ENCODE measurements at regions of chr10 and their contacts with region 1.

Region 1: DNA sequence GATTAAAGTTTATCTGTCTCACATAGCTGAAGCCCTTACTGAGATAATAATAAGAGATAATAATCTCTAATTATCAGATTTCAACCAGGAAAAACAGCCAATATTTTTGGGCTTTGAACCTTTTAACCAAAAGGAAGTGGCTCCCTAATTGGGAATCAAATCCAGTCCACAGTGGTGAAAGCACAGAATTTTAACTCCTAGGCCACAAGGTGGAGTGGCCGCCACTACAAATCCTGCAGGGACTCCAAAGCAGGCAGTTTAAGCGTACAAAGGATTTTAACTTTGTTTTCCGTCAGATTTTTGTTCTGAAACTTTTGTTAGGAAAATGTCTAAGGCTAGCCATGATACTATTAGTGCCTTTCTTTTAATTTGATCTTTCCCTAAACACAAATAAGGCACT is 99.6 kb upstream of the CCNY start:
- DNase-seq: peak in 2 of 4 experiments; percentile 34 to 49
- ATAC-seq: peak; percentile 84
- H3K4me3 ChIP-seq: no peak overlapping the region
- H3K27ac ChIP-seq: no peak overlapping the region
- H3K4me1 ChIP-seq: no peaks in the 10 kb centered on the region; a peak in 1 of 5 replicates
- H3K27me3 ChIP-seq: no peaks in the 10 kb centered on the region
- CTCF ChIP-seq: peak; percentile 42 to 76 (median 47); a peak in 5 of 6 replicates
- EP300 ChIP-seq: no peak
- POLR2A ChIP-seq: no peak
- RAD21 ChIP-seq: peak; percentile 79 to 80

Region 2: GRCh38 chr10:34967335-34967880 is 269.3 kb before region 1 on chr10:
- CTCF ChIA-PET with region 1: no interaction called
- POLR2A ChIA-PET with region 1: no interaction called
- in situ Hi-C with region 1: no loop called
- intact Hi-C with region 1: no loop called
- DNase-seq: no peak
- ATAC-seq: no peak
- H3K4me3 ChIP-seq: no peak overlapping the region
- H3K27ac ChIP-seq: no peak overlapping the region
- H3K4me1 ChIP-seq: no peaks in the 10 kb centered on the region; a peak in 1 of 5 replicates
- H3K27me3 ChIP-seq: peaks cover 18 to 36% of the 10 kb centered on the region in 2 experiments; a peak in 4 of 5 replicates
- CTCF ChIP-seq: no peak
- EP300 ChIP-seq: no peak
- POLR2A ChIP-seq: no peak
- RAD21 ChIP-seq: no peak

Region 3: GRCh38 chr10:35379226-35380137 is 142.7 kb after region 1 on chr10:
- CTCF ChIA-PET with region 1: no interaction called
- POLR2A ChIA-PET with region 1: no interaction called
- in situ Hi-C with region 1: no loop called
- intact Hi-C with region 1: loop called (anchors 5 kb)
- DNase-seq: peak; percentile 91 to 94 (median 92)
- ATAC-seq: peak; percentile 85
- H3K4me3 ChIP-seq: peak overlapping the region; percentile 27
- H3K27ac ChIP-seq: peak overlapping the region; percentile 96
- H3K4me1 ChIP-seq: peaks cover 25 to 65% of the 10 kb centered on the region in 2 experiments
- H3K27me3 ChIP-seq: no peaks in the 10 kb centered on the region
- CTCF ChIP-seq: peak; percentile 30 to 60 (median 59); a peak in 4 of 6 replicates
- EP300 ChIP-seq: peak; percentile 91
- POLR2A ChIP-seq: no peak
- RAD21 ChIP-seq: peak; percentile 57 to 64

Region 4: GRCh38 chr10:35501921-35502320 is 265.2 kb after region 1 on chr10:
- CTCF ChIA-PET with region 1: no interaction called
- POLR2A ChIA-PET with region 1: interaction called, 4 read pairs
- in situ Hi-C with region 1: loop called (anchors 10 kb)
- intact Hi-C with region 1: no loop called
- DNase-seq: peak in 1 of 4 experiments; percentile 24
- ATAC-seq: peak; percentile 59; the same call in 2 of the 3 replicates
- H3K4me3 ChIP-seq: no peak overlapping the region
- H3K27ac ChIP-seq: no peak overlapping the region
- H3K4me1 ChIP-seq: peaks cover 0 to 10% of the 10 kb centered on the region in 2 experiments; a peak in 3 of 5 replicates
- H3K27me3 ChIP-seq: no peaks in the 10 kb centered on the region
- CTCF ChIP-seq: peak in 1 of 3 experiments; percentile 33; a peak in 1 of 6 replicates
- EP300 ChIP-seq: no peak
- POLR2A ChIP-seq: no peak
- RAD21 ChIP-seq: no peak

Region 5: DNA sequence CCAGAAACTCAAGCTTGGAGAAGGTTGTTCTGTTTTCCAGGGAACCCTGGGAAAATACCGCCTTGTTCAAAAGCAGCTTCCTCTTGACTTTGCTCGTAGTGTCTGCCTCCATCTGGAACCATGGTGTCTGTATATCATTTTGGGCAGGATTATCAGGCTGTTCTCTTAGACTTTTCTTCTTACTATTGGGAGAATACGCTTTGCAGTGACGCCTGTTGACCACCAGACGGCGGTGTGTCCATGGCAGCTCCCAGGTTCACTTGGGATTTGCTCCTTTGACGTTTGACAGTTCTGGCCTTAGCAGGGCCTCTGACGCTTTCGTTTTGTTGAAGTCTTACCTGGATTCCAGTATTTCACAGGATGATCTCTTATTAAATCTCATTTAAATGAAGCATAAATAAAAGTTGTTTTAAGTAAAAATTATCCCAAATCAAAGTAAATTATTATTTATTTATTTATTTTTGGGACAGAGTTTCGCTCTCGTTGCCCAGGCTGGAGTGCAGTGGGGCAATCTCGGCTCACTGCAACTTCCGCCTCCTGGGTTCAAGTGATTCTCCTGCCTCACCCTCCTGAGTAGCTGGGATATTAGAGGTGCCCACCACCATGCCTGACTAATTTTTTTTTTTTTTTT is 326.6 kb after region 1 on chr10:
- CTCF ChIA-PET with region 1: interaction called, 3 read pairs
- POLR2A ChIA-PET with region 1: no interaction called
- in situ Hi-C with region 1: loop called (anchors 25 kb)
- intact Hi-C with region 1: loop called (anchors 1 kb)
- DNase-seq: peak; percentile 73 to 84 (median 76)
- ATAC-seq: peak; percentile 92
- H3K4me3 ChIP-seq: no peak overlapping the region
- H3K27ac ChIP-seq: no peak overlapping the region
- H3K4me1 ChIP-seq: peaks cover 0 to 4% of the 10 kb centered on the region in 2 experiments; a peak in 2 of 5 replicates
- H3K27me3 ChIP-seq: no peaks in the 10 kb centered on the region
- CTCF ChIP-seq: peak; percentile 90 to 99 (median 94)
- EP300 ChIP-seq: no peak
- POLR2A ChIP-seq: no peak
- RAD21 ChIP-seq: peak; percentile 49 to 73

Region 6: DNA sequence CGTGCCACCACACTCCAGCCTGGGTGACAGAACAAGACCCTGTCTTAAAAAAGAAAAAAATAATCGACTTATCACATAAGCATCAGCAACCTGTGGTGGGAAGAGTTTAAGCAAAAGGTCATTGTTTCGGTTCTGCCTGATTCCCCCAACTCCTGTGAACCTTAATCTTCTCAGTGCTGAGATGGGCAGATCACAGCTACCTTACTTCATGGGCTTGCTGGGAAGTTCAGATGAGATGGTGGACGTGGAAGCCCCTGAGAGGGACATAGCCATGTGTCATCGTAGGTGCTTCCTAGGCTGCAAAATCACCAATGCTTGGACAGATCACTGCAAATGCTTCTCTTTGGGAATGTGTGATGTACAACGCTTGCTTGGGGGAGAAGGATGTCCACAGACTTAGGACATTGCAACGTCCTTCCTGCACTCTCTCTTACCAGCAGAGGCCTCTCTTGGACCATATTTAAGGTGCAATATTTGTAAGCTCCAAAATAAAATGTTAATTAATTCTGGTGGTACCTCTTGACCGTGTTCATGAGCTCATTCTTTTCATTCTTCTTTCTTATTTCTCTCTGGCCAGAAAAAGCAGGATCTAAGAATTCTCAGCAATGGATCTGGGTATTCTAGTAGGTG is 377.0 kb after region 1 on chr10:
- CTCF ChIA-PET with region 1: no interaction called
- POLR2A ChIA-PET with region 1: no interaction called
- in situ Hi-C with region 1: no loop called
- intact Hi-C with region 1: loop called (anchors 10 kb)
- DNase-seq: peak in 2 of 4 experiments; percentile 9 to 15
- ATAC-seq: peak; percentile 70
- H3K4me3 ChIP-seq: no peak overlapping the region
- H3K27ac ChIP-seq: no peak overlapping the region
- H3K4me1 ChIP-seq: no peaks in the 10 kb centered on the region
- H3K27me3 ChIP-seq: peaks cover 0 to 11% of the 10 kb centered on the region in 2 experiments; a peak in 3 of 5 replicates
- CTCF ChIP-seq: peak; percentile 14 to 41 (median 36); a peak in 4 of 6 replicates
- EP300 ChIP-seq: no peak
- POLR2A ChIP-seq: no peak
- RAD21 ChIP-seq: peak in 1 of 2 experiments; percentile 43; a peak in 2 of 4 replicates

Region 7: GRCh38 chr10:35781643-35782035 is 544.9 kb after region 1 on chr10:
- CTCF ChIA-PET with region 1: no interaction called
- POLR2A ChIA-PET with region 1: no interaction called
- in situ Hi-C with region 1: loop called (anchors 25 kb)
- intact Hi-C with region 1: no loop called
- DNase-seq: peak; percentile 22 to 47 (median 28)
- ATAC-seq: peak; percentile 51; the same call in 2 of the 3 replicates
- H3K4me3 ChIP-seq: no peak overlapping the region
- H3K27ac ChIP-seq: no peak overlapping the region
- H3K4me1 ChIP-seq: no peaks in the 10 kb centered on the region
- H3K27me3 ChIP-seq: no peaks in the 10 kb centered on the region
- CTCF ChIP-seq: peak; percentile 20 to 45 (median 33); a peak in 4 of 6 replicates
- EP300 ChIP-seq: no peak
- POLR2A ChIP-seq: no peak
- RAD21 ChIP-seq: peak in 1 of 2 experiments; percentile 41; a peak in 1 of 4 replicates